ENCODE measurements at regions of chrX and their contacts with region 1.

Region 1: GRCh38 chrX:43836435-43837184 is 45.6 kb downstream of the MAOB start:
- DNase-seq: no peak
- H3K4me3 ChIP-seq: no peak overlapping the region
- H3K27ac ChIP-seq: no peak overlapping the region
- H3K4me1 ChIP-seq: no peaks in the 10 kb centered on the region
- H3K27me3 ChIP-seq: no peaks in the 10 kb centered on the region
- CTCF ChIP-seq: peak; percentile 58

Region 2: GRCh38 chrX:43958529-43958928 is 121.9 kb after region 1 on chrX:
- CTCF ChIA-PET with region 1: interaction called, 8 read pairs
- POLR2A ChIA-PET with region 1: no interaction called
- intact Hi-C with region 1: loop called (anchors 5 kb)
- DNase-seq: peak; percentile 14 to 51
- H3K4me3 ChIP-seq: no peak overlapping the region
- H3K27ac ChIP-seq: no peak overlapping the region
- H3K4me1 ChIP-seq: no peaks in the 10 kb centered on the region
- H3K27me3 ChIP-seq: no peaks in the 10 kb centered on the region
- CTCF ChIP-seq: peak; percentile 67

Region 3: DNA sequence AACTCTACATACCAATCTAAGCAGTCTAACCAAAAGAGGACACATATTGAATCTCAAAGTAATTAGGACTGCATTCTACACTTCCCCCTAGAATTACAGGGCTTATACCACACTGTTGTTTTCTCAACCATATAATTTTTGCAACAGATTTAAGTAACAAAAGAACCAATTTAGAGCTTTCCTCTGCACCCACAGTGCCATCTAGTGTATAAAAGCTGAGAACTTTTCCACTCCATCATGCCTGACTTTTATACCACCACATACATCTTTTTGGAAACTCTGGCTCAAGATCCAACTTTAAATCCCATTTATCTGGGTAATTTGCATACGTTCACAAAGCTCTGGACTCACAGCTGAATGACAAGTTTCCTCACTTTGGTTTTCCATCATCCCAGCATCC is 407.4 kb after region 1 on chrX:
- CTCF ChIA-PET with region 1: no interaction called
- POLR2A ChIA-PET with region 1: no interaction called
- intact Hi-C with region 1: loop called (anchors 10 kb)
- DNase-seq: no peak
- H3K4me3 ChIP-seq: no peak overlapping the region
- H3K27ac ChIP-seq: no peak overlapping the region
- H3K4me1 ChIP-seq: no peaks in the 10 kb centered on the region
- H3K27me3 ChIP-seq: no peaks in the 10 kb centered on the region
- CTCF ChIP-seq: peak; percentile 51

Region 4: GRCh38 chrX:44261286-44261685 is 424.7 kb after region 1 on chrX:
- CTCF ChIA-PET with region 1: no interaction called
- POLR2A ChIA-PET with region 1: no interaction called
- intact Hi-C with region 1: no loop called
- DNase-seq: no peak
- H3K4me3 ChIP-seq: no peak overlapping the region
- H3K27ac ChIP-seq: no peak overlapping the region
- H3K4me1 ChIP-seq: no peaks in the 10 kb centered on the region
- H3K27me3 ChIP-seq: no peaks in the 10 kb centered on the region
- CTCF ChIP-seq: no peak